ENCODE measurements at regions of chr19 and their contacts with region 1.

Region 1: DNA sequence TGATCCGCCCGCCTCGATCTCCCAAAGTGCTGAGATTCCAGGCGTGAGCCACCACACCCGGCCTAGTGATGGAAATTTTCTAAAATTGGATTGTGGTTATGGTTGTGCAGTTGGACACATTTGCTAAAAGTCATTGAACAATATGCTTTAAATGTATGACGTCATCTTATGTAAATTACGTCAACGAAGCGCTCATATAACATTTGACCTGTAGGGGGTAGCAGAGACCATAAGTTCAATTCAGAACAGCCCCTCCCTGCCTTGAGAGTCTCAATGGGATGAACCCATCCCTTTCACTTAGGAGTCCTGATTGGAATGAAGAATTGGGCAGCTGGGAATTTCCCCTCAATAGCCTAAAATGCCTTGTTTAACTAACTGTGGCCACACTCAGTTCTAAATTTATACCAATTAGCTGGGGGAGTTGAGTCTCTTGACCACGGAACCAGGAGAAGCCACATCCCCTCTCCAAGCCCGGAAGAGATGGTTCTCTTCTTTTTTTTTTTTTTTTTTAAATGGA is 15.3 kb upstream of the TLE6 start:
- DNase-seq: peak in 1 of 5 donors; percentile 45
- ATAC-seq: peak; percentile 61 to 90 (median 78)
- H3K4me3 ChIP-seq: peak overlapping the region in 2 of 12 donors; percentile 0 to 25
- H3K27ac ChIP-seq: peak overlapping the region in 1 of 12 donors; percentile 15
- H3K4me1 ChIP-seq: peaks cover 0 to 7% (median 0%) of the 10 kb centered on the region in 12 donors
- H3K27me3 ChIP-seq: no peaks in the 10 kb centered on the region
- CTCF ChIP-seq: peak; percentile 67 to 88 (median 79)
- POLR2A ChIP-seq: no peak

Region 2: GRCh38 chr19:2795827-2796658 is 166.1 kb before region 1 on chr19:
- intact Hi-C with region 1: no loop called
- DNase-seq: no peak
- ATAC-seq: no peak
- H3K4me3 ChIP-seq: no peak overlapping the region
- H3K27ac ChIP-seq: peak overlapping the region in 8 of 12 donors; percentile 60 to 89 (median 81)
- H3K4me1 ChIP-seq: peaks cover 0 to 29% (median 8%) of the 10 kb centered on the region in 12 donors
- H3K27me3 ChIP-seq: no peaks in the 10 kb centered on the region
- CTCF ChIP-seq: no peak
- POLR2A ChIP-seq: no peak

Region 3: GRCh38 chr19:2840794-2841790 is 121.0 kb before region 1 on chr19 and contains the start of gene ZNF555:
- intact Hi-C with region 1: no loop called
- DNase-seq: peak; percentile 99 to 100 (median 100)
- ATAC-seq: peak; percentile 98 to 99 (median 98)
- H3K4me3 ChIP-seq: peak within 1 kb of the TSS; percentile 60 to 97 (median 81)
- H3K27ac ChIP-seq: peak within 1 kb of the TSS; percentile 69 to 99 (median 94)
- H3K4me1 ChIP-seq: peaks cover 0 to 28% (median 11%) of the 10 kb centered on the region in 12 donors
- H3K27me3 ChIP-seq: no peaks in the 10 kb centered on the region
- CTCF ChIP-seq: peak; percentile 39 to 70 (median 56)
- POLR2A ChIP-seq: peak in 1 of 2 donors; percentile 62
- total RNA-seq, gene ZNF555: 5.9 to 11.5 (median 8.2) TPM

Region 4: GRCh38 chr19:3062168-3063102 is 100.3 kb after region 1 on chr19 and contains the start of gene TLE5:
- intact Hi-C with region 1: loop called in 1 of 10 experiments (anchors 5 kb)
- DNase-seq: peak; percentile 73 to 90 (median 79)
- ATAC-seq: peak; percentile 19 to 78 (median 60)
- H3K4me3 ChIP-seq: peak within 1 kb of the TSS; percentile 77 to 98 (median 90)
- H3K27ac ChIP-seq: peak within 1 kb of the TSS; percentile 97 to 100 (median 99)
- H3K4me1 ChIP-seq: peaks cover 0 to 50% (median 42%) of the 10 kb centered on the region in 12 donors
- H3K27me3 ChIP-seq: no peaks in the 10 kb centered on the region
- CTCF ChIP-seq: peak in 1 of 12 donors; percentile 17
- POLR2A ChIP-seq: no peak
- total RNA-seq, gene TLE5: 593 to 1,121 (median 711) TPM

Region 5: DNA sequence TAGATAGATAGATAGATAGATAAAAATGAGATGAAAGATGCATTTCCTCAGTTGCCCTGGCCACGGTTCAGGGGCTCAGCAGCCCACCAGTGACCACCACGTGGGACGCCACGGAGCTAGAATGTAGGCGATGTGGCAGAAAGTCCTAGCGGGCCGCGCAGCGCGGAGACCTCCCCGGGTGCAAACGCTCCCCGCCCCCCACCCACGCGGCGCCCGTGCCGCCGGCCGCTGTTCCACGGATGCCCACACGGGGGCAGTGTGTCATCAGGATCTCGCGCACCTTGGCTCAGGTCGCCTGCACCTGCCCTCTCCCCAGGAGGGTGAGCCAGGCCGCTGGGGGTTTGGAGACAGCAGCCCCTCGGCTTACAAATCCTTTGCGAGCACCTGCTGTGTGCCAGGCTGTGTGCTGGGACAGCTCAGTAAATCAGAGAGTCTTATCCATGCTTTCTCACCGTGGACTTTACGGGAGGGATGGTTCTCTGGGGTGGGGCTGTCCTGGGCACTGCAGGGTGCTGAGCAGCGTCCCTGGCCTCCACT is 113.9 kb after region 1 on chr19:
- intact Hi-C with region 1: loop called in 4 of 10 experiments (anchors 1 to 10 kb)
- DNase-seq: peak in 2 of 5 donors; percentile 52 to 79
- ATAC-seq: peak; percentile 24 to 76 (median 73)
- H3K4me3 ChIP-seq: peak overlapping the region in 3 of 12 donors; percentile 15 to 29 (median 29)
- H3K27ac ChIP-seq: no peak overlapping the region
- H3K4me1 ChIP-seq: peaks cover 0 to 14% (median 4%) of the 10 kb centered on the region in 12 donors
- H3K27me3 ChIP-seq: no peaks in the 10 kb centered on the region
- CTCF ChIP-seq: peak; percentile 86 to 95 (median 90)
- POLR2A ChIP-seq: no peak

Region 6: DNA sequence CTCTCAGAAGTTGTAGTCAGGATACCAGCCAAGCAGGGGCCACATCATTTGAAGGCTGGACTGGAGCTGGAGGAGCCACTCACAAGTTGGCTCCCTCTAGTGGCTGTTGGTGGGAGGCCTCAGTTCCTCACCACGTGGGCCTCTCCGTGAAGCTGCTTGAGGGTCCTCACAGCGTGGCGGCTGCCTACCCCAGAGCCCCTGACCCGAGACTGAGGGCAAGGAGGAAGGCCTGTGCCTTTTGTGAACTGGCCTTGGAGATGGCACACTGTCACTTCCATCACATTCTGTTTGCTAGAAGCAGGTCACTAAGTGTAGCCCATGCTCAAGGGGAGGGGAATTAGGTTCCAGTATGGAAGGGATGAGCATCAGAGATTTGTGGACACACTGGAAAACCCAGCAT is 146.7 kb after region 1 on chr19:
- intact Hi-C with region 1: loop called in 7 of 10 experiments (anchors 1 to 10 kb)
- DNase-seq: peak in 2 of 5 donors; percentile 61 to 69
- ATAC-seq: peak in 2 of 4 donors; percentile 34 to 50
- H3K4me3 ChIP-seq: no peak overlapping the region
- H3K27ac ChIP-seq: no peak overlapping the region
- H3K4me1 ChIP-seq: peaks cover 1 to 53% (median 19%) of the 10 kb centered on the region in 12 donors
- H3K27me3 ChIP-seq: no peaks in the 10 kb centered on the region
- CTCF ChIP-seq: peak; percentile 69 to 87 (median 78)
- POLR2A ChIP-seq: no peak

Region 7: GRCh38 chr19:3125900-3126524 is 163.9 kb after region 1 on chr19:
- intact Hi-C with region 1: loop called in 2 of 10 experiments (anchors 2 to 5 kb)
- DNase-seq: peak in 4 of 5 donors; percentile 59 to 84 (median 68)
- ATAC-seq: peak in 3 of 4 donors; percentile 67 to 74 (median 70)
- H3K4me3 ChIP-seq: no peak overlapping the region
- H3K27ac ChIP-seq: no peak overlapping the region
- H3K4me1 ChIP-seq: peaks cover 0 to 8% (median 0%) of the 10 kb centered on the region in 12 donors
- H3K27me3 ChIP-seq: no peaks in the 10 kb centered on the region
- CTCF ChIP-seq: peak; percentile 54 to 85 (median 73)
- POLR2A ChIP-seq: no peak

Region 8: GRCh38 chr19:3163230-3163886 is 201.3 kb after region 1 on chr19:
- intact Hi-C with region 1: loop called in 7 of 10 experiments (anchors 2 to 10 kb)
- DNase-seq: peak; percentile 51 to 86 (median 67)
- ATAC-seq: peak; percentile 65 to 91 (median 88)
- H3K4me3 ChIP-seq: no peak overlapping the region
- H3K27ac ChIP-seq: no peak overlapping the region
- H3K4me1 ChIP-seq: peaks cover 0 to 38% (median 0%) of the 10 kb centered on the region in 12 donors
- H3K27me3 ChIP-seq: no peaks in the 10 kb centered on the region
- CTCF ChIP-seq: peak; percentile 87 to 98 (median 94)
- POLR2A ChIP-seq: no peak